Activated T-helper 1 cell treated with anti-CD3 and anti-CD28 coated beads, Interleukin-12 subunit alpha, Interleukin-12 subunit beta, Interleukin-2, Interleukin-4 antibody, amounts not matched to agents 30 ng/mL and 10 ng/mL and 1 ng/mL, durations not matched to agents 14 hours and 24 hours and 36 hours (primary cell): ENCODE measurements at regions of chr20 and their contacts with region 1.

Region 1: GRCh38 chr20:63873477-63873971 is 8.5 kb downstream of the TPD52L2 start:
- DNase-seq: peak; percentile 48
- H3K4me3 Mint-ChIP-seq: peak overlapping the region; percentile 40
- H3K27ac Mint-ChIP-seq: peak overlapping the region; percentile 98
- H3K4me1 Mint-ChIP-seq: peaks cover 8% of the 10 kb centered on the region
- H3K27me3 Mint-ChIP-seq: no peaks in the 10 kb centered on the region

Region 2: GRCh38 chr20:63894358-63895201 is 21.1 kb after region 1 on chr20 and contains the start of gene DNAJC5:
- intact Hi-C with region 1: loop called (anchors 2 kb)
- DNase-seq: peak; percentile 98
- H3K4me3 Mint-ChIP-seq: peak within 1 kb of the TSS; percentile 89
- H3K27ac Mint-ChIP-seq: peak within 1 kb of the TSS; percentile 96
- H3K4me1 Mint-ChIP-seq: peaks cover 42% of the 10 kb centered on the region
- H3K27me3 Mint-ChIP-seq: no peaks in the 10 kb centered on the region
- total RNA-seq, gene DNAJC5: 47.5 and 48.2 TPM in 2 replicates